Heart left ventricle (tissue), 16 donors: ENCODE measurements at regions of chr9 and their contacts with region 1.

Region 1: GRCh38 chr9:19379697-19380046 is 364 bp downstream of the RPS6 start:
- DNase-seq: no peak
- ATAC-seq: peak; percentile 29 to 64 (median 62)
- H3K4me3 ChIP-seq: peak overlapping the region; percentile 44 to 86 (median 75)
- H3K27ac ChIP-seq: peak overlapping the region; percentile 64 to 97 (median 91)
- H3K4me1 ChIP-seq: peaks cover 0 to 38% (median 18%) of the 10 kb centered on the region in 12 donors
- H3K27me3 ChIP-seq: no peaks in the 10 kb centered on the region
- CTCF ChIP-seq: peak in 1 of 12 donors; percentile 6
- POLR2A ChIP-seq: no peak

Region 2: DNA sequence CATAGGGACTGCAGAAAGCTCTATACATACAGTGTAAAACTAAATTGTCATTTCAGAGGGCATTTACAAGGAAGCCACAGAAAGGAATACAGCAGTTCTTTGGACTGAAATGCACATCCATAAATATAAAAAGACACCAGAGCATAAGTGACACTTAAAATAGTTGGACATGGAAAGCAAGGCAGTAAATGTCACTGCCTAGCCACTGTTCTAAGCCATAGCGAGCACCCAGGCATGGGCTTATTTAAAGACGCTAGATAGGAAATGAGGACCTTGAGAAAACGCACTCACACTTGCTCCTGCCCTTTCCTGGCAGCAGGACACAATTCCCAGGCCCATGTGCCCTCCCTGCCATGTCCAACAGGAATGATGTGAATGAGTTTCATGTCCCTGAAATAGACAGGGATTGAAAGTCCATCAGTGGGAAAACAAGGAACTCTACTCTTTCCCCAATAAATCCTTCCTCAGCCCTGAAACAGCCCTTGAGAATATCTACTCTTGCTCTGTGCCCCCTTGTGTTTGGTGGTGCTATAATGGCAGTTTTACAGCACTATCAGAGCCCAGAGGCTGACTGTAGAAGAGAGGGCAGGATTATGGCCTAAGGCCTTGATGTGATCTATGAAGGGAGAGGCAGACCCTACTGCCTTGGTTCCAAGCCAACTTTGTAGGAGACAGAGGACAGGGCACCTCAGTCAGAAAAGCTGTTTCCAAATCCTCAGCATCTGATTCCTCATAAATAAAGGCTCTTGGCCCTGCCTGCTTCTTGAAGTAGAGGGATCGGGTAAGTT is 529.6 kb before region 1 on chr9:
- intact Hi-C with region 1: no loop called
- DNase-seq: peak in 2 of 5 donors; percentile 25 to 45
- ATAC-seq: peak; percentile 62 to 89 (median 80)
- H3K4me3 ChIP-seq: no peak overlapping the region
- H3K27ac ChIP-seq: peak overlapping the region in 8 of 12 donors; percentile 26 to 47 (median 34)
- H3K4me1 ChIP-seq: peaks cover 0 to 23% (median 9%) of the 10 kb centered on the region in 12 donors
- H3K27me3 ChIP-seq: no peaks in the 10 kb centered on the region
- CTCF ChIP-seq: peak in 1 of 12 donors; percentile 10
- POLR2A ChIP-seq: no peak

Region 3: DNA sequence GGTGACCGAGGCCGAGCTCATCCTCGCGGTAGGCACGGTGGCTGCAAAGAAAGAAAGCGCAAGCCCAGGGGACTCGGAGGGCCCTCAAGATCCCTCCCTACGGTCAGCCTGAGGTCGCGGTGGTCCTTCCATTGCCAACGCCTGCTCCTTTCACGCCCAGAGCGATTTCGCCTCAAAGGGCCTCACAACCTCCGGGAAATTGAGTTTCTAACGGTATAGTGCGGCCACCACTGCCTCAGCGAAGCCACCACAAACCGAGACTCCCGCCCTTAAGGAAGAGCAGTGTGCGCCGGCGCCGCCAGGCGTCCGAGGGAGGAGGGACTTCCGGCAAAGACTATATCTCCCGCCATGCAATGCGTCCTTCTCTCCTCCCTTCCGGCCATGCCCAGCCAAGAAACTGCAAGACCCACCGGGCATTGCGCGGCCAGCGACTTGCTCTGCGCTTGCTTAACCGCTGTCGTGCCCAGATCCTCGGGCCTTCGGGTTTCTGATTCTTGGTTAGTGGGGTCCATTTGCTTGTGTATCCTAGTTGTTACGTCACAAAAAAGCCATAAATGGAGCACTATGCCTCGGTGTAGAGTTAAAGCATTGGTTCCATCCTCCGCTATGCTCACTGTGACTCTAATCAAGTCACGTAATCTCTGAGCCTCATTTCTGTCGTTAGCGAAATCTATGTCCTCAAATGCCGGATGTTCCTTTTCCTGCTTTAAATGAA is 276.9 kb before region 1 on chr9 and contains the start of gene HAUS6:
- intact Hi-C with region 1: loop called in 3 of 10 experiments (anchors 10 kb)
- DNase-seq: peak; percentile 97 to 98 (median 98)
- ATAC-seq: peak; percentile 100
- H3K4me3 ChIP-seq: peak within 1 kb of the TSS; percentile 56 to 92 (median 77)
- H3K27ac ChIP-seq: peak within 1 kb of the TSS; percentile 61 to 92 (median 88)
- H3K4me1 ChIP-seq: peaks cover 0 to 24% (median 11%) of the 10 kb centered on the region in 12 donors
- H3K27me3 ChIP-seq: no peaks in the 10 kb centered on the region
- CTCF ChIP-seq: peak; percentile 34 to 65 (median 47)
- POLR2A ChIP-seq: peak in 1 of 2 donors; percentile 64
- total RNA-seq, gene HAUS6: 4.6 to 8.8 (median 7.3) TPM

Region 4: DNA sequence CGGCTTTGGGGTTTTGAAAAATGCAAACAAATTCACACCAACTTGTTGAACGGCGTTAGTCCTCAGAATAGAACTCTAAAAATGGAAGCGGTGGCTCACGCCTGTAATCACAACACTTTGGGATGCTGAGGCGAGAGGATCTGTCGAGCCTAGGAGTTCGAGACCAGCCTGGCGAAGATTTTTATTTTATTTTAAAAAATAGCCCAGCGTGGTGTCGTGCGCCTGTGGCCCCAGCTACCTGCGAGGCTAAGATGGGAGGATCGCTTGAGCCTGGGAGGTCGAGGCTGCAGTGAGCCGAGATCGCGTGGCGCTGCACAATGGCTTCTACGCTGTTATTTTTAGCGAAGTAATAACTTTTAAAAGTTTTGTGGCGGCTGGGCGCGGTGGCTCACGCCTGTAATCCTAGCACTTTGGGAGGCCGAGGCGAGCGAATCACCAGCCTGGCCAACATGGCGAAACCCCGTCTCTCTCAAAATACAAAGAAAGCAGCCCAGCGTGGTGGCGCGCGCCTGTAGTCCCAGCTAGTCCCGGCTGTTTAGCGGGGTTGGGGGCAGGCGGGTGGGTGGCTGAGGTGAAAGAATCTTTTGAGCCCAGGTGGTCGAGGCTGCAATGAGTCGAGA is 251.7 kb before region 1 on chr9:
- intact Hi-C with region 1: loop called in 1 of 10 experiments (anchors 10 kb)
- DNase-seq: peak; percentile 16 to 72 (median 46)
- ATAC-seq: peak; percentile 20 to 43 (median 42)
- H3K4me3 ChIP-seq: peak overlapping the region; percentile 58 to 95 (median 82)
- H3K27ac ChIP-seq: peak overlapping the region; percentile 89 to 100 (median 97)
- H3K4me1 ChIP-seq: peaks cover 4 to 62% (median 26%) of the 10 kb centered on the region in 12 donors
- H3K27me3 ChIP-seq: no peaks in the 10 kb centered on the region
- CTCF ChIP-seq: no peak
- POLR2A ChIP-seq: no peak

Region 5: DNA sequence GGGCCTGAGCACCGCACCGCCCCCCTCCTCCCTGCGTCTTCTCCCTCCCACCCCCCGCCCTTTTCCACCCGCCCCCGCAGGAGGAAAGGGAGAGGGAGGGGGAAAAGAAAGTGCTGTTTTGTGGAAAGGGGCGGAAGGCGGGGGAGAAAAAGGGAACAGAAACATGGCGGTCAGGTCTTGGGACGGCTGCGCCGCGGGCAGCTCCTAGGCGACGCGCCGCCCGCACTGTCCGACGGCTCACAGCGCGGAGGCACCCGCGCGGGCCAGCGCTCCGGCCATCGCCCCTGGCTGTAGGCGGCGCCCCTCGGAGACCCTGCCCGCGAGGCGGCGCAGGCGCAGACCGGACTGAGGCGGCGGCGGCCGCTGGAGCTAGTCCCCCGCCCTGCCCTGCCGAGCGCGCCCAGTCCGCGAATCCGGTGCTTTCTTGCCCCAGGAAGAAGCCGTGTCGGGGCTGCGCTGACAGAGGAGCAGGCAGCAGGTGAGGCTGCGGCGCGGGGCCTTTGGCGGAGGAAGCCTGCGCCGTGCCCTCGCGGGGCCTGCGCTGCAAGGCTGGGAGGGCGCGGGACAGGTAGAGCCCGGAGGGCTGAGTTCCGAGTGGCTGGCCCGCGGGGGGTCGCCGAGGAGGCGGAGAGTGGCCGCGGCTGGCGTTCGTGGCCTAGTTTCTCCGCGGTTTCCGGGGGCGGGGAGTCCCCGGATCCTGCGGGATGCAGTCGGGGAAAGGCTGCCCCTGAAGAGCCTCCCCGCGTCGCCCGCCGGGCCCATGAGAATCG is 149.1 kb before region 1 on chr9 and contains the start of gene DENND4C:
- intact Hi-C with region 1: loop called in 2 of 10 experiments (anchors 1 to 10 kb)
- DNase-seq: peak; percentile 88 to 95 (median 90)
- ATAC-seq: peak; percentile 74 to 96 (median 90)
- H3K4me3 ChIP-seq: peak within 1 kb of the TSS; percentile 84 to 100 (median 97)
- H3K27ac ChIP-seq: peak within 1 kb of the TSS; percentile 95 to 100 (median 99)
- H3K4me1 ChIP-seq: peaks cover 0 to 31% (median 22%) of the 10 kb centered on the region in 12 donors
- H3K27me3 ChIP-seq: no peaks in the 10 kb centered on the region
- CTCF ChIP-seq: peak in 5 of 12 donors; percentile 19 to 42 (median 28)
- POLR2A ChIP-seq: peak in 1 of 2 donors; percentile 83
- total RNA-seq, gene DENND4C: 19.4 to 36.9 (median 24.5) TPM

Region 6: GRCh38 chr9:19298436-19299000 is 81.2 kb before region 1 on chr9:
- intact Hi-C with region 1: loop called in 2 of 10 experiments (anchors 10 kb)
- DNase-seq: no peak
- ATAC-seq: no peak
- H3K4me3 ChIP-seq: no peak overlapping the region
- H3K27ac ChIP-seq: no peak overlapping the region
- H3K4me1 ChIP-seq: peaks cover 0 to 7% (median 0%) of the 10 kb centered on the region in 12 donors
- H3K27me3 ChIP-seq: no peaks in the 10 kb centered on the region
- CTCF ChIP-seq: no peak
- POLR2A ChIP-seq: no peak

Region 7: GRCh38 chr9:19306568-19306967 is 73.1 kb before region 1 on chr9:
- intact Hi-C with region 1: loop called in 1 of 10 experiments (anchors 10 kb)
- DNase-seq: no peak
- ATAC-seq: no peak
- H3K4me3 ChIP-seq: no peak overlapping the region
- H3K27ac ChIP-seq: no peak overlapping the region
- H3K4me1 ChIP-seq: no peaks in the 10 kb centered on the region
- H3K27me3 ChIP-seq: no peaks in the 10 kb centered on the region
- CTCF ChIP-seq: no peak
- POLR2A ChIP-seq: no peak

Region 8: DNA sequence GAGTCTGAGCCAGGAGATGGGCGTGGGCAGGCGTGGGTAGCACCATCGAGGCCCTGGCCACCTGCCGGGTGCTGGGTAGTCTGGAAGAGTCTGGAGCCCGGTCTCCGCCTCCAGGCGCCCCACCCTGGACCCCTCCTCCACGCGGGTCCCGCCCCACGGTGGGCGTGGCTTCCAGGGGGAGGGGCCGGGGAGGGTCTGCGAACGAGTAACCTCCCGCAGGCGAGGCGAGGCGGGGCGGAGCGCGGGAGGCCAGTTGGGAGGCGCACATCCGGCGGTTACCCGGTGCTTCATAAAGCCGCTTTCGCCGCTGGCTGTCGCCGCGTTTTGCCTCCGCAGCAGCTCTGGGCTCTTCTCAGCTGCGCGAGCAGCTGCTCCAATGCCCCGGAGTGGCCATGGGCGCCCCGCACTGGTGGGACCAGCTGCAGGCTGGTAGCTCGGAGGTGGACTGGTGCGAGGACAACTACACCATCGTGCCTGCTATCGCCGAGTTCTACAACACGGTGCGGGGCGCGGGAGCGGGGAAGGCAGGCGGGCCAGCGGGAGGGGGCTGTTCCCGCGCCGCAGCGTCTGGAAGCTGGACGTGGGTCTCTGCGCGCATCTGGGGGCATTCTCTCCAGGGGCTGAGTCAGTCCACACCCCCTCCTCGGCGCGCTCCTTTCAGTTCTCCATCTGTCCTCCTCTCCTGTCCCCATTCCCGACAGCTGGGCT is 29.2 kb after region 1 on chr9 and contains the start of gene ACER2:
- intact Hi-C with region 1: loop called in 6 of 10 experiments (anchors 1 to 2 kb)
- DNase-seq: peak; percentile 96 to 99 (median 97)
- ATAC-seq: peak; percentile 97 to 99 (median 98)
- H3K4me3 ChIP-seq: peak within 1 kb of the TSS; percentile 65 to 98 (median 89)
- H3K27ac ChIP-seq: peak within 1 kb of the TSS; percentile 83 to 96 (median 88)
- H3K4me1 ChIP-seq: peaks cover 0 to 26% (median 22%) of the 10 kb centered on the region in 12 donors
- H3K27me3 ChIP-seq: no peaks in the 10 kb centered on the region
- CTCF ChIP-seq: peak in 4 of 12 donors; percentile 8 to 22 (median 13)
- POLR2A ChIP-seq: peak; percentile 70 to 96
- total RNA-seq, gene ACER2: 1.6 to 4.5 (median 3.9) TPM